Colonic mucosa (tissue), 4 donors: ENCODE measurements at regions of chr6 and their contacts with region 1.

Region 1: GRCh38 chr6:128731249-128732165 is 151.4 kb upstream of the LAMA2 start:
- DNase-seq: no peak
- H3K4me3 ChIP-seq: no peak overlapping the region
- H3K27ac ChIP-seq: no peak overlapping the region
- H3K4me1 ChIP-seq: no peaks in the 10 kb centered on the region
- H3K27me3 ChIP-seq: no peaks in the 10 kb centered on the region
- CTCF ChIP-seq: no peak

Region 2: DNA sequence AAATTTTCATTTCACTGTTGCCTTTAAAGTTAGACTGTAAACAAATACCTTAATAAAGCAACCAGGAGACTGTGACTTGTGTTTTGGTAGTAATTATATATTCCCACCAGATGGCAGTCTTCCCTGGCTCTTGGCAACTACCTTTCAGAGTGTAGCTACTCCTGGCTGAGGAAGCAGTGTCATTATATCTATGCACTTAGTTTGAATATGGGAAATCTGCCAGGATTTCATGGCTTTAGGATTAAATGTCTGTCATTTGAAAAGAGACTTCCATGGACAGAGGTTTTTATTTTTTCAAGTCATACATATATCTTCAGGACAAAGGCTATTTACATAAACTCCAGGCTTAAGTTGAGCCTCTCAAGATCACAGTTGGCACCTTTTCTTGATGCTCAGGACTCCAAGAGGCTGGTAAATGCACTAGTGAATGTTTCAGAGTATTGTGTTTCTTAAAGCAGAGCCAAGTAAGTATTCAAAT is 994.5 kb before region 1 on chr6:
- intact Hi-C with region 1: loop called (anchors 5 kb)
- DNase-seq: peak; percentile 36
- H3K4me3 ChIP-seq: no peak overlapping the region
- H3K27ac ChIP-seq: no peak overlapping the region
- H3K4me1 ChIP-seq: no peaks in the 10 kb centered on the region
- H3K27me3 ChIP-seq: no peaks in the 10 kb centered on the region
- CTCF ChIP-seq: peak; percentile 47

Region 3: DNA sequence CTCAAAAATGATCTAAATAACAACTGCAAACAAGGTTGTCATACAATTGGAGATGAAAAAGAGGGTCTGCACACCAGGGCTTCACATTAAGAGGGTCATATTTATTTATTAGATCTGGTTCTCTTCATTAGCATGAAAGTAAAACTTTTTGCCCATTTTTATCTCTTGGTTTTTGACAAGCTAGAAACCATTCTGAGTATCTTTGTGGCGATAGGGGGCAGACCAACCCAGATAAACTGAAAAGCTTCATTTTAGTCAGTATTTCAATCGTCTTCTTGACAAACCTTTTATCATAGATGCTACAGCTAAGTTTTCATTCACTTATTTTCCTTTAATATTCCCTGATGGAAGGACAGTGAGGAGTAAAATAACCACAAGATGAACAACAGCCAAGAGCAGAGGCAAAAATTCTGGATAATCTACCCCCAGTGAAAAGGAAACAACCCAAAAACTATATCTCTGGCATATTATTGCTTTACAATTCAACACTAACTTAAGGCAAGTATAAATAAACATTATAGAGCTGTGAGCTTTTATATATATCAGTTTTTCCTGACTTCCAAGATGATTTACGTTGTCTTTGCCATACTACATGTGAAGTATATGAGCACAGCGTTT is 875.9 kb before region 1 on chr6:
- intact Hi-C with region 1: loop called (anchors 10 kb)
- DNase-seq: no peak
- H3K4me3 ChIP-seq: no peak overlapping the region
- H3K27ac ChIP-seq: no peak overlapping the region
- H3K4me1 ChIP-seq: no peaks in the 10 kb centered on the region
- H3K27me3 ChIP-seq: no peaks in the 10 kb centered on the region
- CTCF ChIP-seq: peak; percentile 27

Region 4: GRCh38 chr6:129370268-129370916 is 638.9 kb after region 1 on chr6:
- intact Hi-C with region 1: loop called (anchors 5 kb)
- DNase-seq: peak; percentile 64
- H3K4me3 ChIP-seq: no peak overlapping the region
- H3K27ac ChIP-seq: no peak overlapping the region
- H3K4me1 ChIP-seq: no peaks in the 10 kb centered on the region
- H3K27me3 ChIP-seq: no peaks in the 10 kb centered on the region
- CTCF ChIP-seq: peak; percentile 55